ENCODE measurements at regions of chr13 and their contacts with region 1.

Region 1: GRCh38 chr13:46751811-46752635 is 44.9 kb downstream of the ESD start:
- DNase-seq: peak; percentile 50
- H3K4me3 Mint-ChIP-seq: peak overlapping the region; percentile 55
- H3K27ac Mint-ChIP-seq: peak overlapping the region; percentile 72
- H3K4me1 Mint-ChIP-seq: peaks cover 36% of the 10 kb centered on the region
- H3K27me3 Mint-ChIP-seq: no peaks in the 10 kb centered on the region

Region 2: DNA sequence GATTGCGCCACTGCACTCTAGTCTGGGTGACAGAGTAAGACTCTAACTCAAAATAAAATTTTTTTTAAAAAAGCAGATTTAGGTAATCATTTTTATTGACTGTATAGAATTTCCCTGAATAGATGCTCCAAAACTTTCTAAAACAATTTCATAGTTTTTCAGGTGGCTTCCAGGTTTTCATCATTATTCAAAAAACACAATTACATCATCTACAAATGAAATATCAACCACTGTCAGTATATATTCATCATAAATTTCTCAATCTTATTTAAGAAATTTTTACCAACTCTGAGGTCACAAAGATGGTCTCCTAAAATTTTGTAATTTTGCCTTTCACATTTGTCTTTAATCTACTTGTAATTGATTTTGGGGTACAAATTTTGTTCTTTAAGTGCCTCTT is 747.5 kb before region 1 on chr13:
- intact Hi-C with region 1: no loop called
- DNase-seq: no peak
- H3K4me3 Mint-ChIP-seq: no peak overlapping the region
- H3K27ac Mint-ChIP-seq: no peak overlapping the region
- H3K4me1 Mint-ChIP-seq: peaks cover 2% of the 10 kb centered on the region
- H3K27me3 Mint-ChIP-seq: no peaks in the 10 kb centered on the region

Region 3: GRCh38 chr13:46796515-46797474 is 44.8 kb after region 1 on chr13 and contains the start of gene ESD:
- intact Hi-C with region 1: loop called (anchors 2 kb)
- DNase-seq: peak; percentile 84
- H3K4me3 Mint-ChIP-seq: peak within 1 kb of the TSS; percentile 93
- H3K27ac Mint-ChIP-seq: peak within 1 kb of the TSS; percentile 94
- H3K4me1 Mint-ChIP-seq: peaks cover 31% of the 10 kb centered on the region
- H3K27me3 Mint-ChIP-seq: peaks cover 3% of the 10 kb centered on the region
- total RNA-seq, gene ESD: 125 and 126 TPM in 2 replicates

Measured in activated T-helper 2 cell treated with anti-CD3 and anti-CD28 coated beads, Interferon-gamma antibody, Interleukin-2, Interleukin-4, amounts not matched to agents 10 μg/mL and 5 μg/mL and 100 μg/mL, durations not matched to agents 14 hours and 24 hours and 36 hours (primary cell).